AG04450 (cell line): ENCODE measurements at regions of chr12 and their contacts with region 1.

Region 1: GRCh38 chr12:10153271-10154144 is 18.4 kb downstream of the OLR1 start:
- DNase-seq: no peak
- H3K4me3 ChIP-seq: peak overlapping the region; percentile 50
- H3K27ac ChIP-seq: peak overlapping the region; percentile 70
- H3K27me3 ChIP-seq: no peaks in the 10 kb centered on the region
- CTCF ChIP-seq: peak; percentile 78

Region 2: DNA sequence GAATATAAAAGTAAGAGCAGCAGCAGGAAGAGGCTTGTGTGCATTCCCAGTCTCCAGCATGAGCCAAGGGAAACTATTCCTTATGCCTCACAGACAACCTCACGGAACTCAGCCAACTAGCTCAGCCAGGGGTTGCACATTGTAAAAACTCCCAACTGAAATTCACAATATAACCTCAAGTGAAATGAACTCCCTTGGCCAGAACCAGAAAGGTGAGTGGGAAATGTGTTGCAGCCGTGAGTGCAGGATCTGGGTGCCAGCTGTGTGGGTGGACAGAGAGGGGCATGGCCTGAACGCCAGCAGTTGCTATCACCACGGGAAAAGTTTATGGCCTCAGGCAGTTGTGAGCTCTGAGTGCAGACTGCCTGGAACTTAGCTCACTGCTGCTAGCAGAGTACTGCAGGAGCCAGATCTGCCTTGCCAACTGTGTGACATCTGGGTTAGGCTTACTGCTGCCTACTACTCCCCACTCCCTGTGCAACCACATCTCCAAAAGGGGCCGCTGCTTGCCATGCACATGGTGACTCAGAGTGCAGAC is 52.4 kb before region 1 on chr12:
- CTCF ChIA-PET with region 1: no interaction called
- POLR2A ChIA-PET with region 1: no interaction called
- DNase-seq: no peak
- H3K4me3 ChIP-seq: no peak overlapping the region
- H3K27ac ChIP-seq: no peak overlapping the region
- H3K27me3 ChIP-seq: no peaks in the 10 kb centered on the region
- CTCF ChIP-seq: no peak

Region 3: GRCh38 chr12:10130042-10130441 is 23.5 kb before region 1 on chr12 and contains the start of gene CLEC7A:
- CTCF ChIA-PET with region 1: interaction called, 13 read pairs
- POLR2A ChIA-PET with region 1: no interaction called
- DNase-seq: no peak
- H3K4me3 ChIP-seq: no peak within 1 kb of the TSS
- H3K27ac ChIP-seq: no peak within 1 kb of the TSS
- H3K27me3 ChIP-seq: no peaks in the 10 kb centered on the region
- CTCF ChIP-seq: no peak
- polyA plus RNA-seq, gene CLEC7A: not detected in 2 replicates

Region 4: GRCh38 chr12:10167588-10167987 is 14.1 kb after region 1 on chr12:
- CTCF ChIA-PET with region 1: interaction called, 50 read pairs
- POLR2A ChIA-PET with region 1: interaction called, 3 read pairs
- DNase-seq: no peak
- H3K4me3 ChIP-seq: no peak overlapping the region
- H3K27ac ChIP-seq: no peak overlapping the region
- H3K27me3 ChIP-seq: no peaks in the 10 kb centered on the region
- CTCF ChIP-seq: no peak

Region 5: GRCh38 chr12:10190558-10191388 is 37.3 kb after region 1 on chr12:
- CTCF ChIA-PET with region 1: interaction called, 70 read pairs
- POLR2A ChIA-PET with region 1: interaction called, 10 read pairs
- DNase-seq: no peak
- H3K4me3 ChIP-seq: no peak overlapping the region
- H3K27ac ChIP-seq: no peak overlapping the region
- H3K27me3 ChIP-seq: no peaks in the 10 kb centered on the region
- CTCF ChIP-seq: peak; percentile 82

Region 6: DNA sequence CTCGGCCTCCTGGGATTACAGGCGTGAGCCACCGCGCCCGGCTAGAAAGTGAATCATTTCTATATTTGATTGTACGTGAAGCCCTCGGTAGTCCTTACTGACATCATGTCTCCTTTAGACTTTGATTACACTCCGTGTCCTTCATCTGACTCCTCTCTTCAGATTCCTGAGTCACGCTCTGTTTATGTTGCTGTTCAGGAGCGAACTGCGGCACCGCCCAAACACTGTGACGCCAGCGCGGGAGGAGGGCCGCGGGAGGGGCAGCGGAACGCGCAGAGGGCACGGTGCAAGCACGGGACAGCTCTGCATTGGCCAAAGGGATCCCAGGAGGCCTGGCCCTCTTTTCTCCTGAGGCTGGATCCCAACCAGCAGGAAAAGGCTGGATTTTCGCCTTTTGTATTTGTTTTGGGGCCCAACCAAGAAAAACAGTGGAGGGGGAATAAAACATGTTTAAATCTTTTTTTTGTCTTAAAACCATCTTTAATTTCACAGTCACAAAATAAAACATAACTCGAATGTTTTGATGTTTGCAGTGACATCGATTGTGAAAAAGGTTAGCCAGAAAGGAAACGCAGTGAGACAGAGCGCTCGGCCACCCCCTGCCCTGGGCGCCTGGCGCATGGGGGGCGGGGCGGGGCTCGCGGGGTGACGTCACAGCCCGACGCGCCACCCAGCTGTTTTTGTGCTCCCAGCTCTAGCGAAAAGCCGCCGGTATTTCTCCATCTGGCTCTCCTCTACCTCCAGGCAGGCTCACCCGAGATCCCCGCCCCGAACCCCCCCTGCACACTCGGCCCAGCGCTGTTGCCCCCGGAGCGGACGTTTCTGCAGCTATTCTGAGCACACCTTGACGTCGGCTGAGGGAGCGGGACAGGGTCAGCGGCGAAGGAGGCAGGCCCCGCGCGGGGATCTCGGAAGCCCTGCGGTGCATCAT is 59.0 kb after region 1 on chr12 and contains the start of gene GABARAPL1:
- CTCF ChIA-PET with region 1: interaction called, 36 read pairs
- POLR2A ChIA-PET with region 1: interaction called, 21 read pairs
- DNase-seq: peak; percentile 99
- H3K4me3 ChIP-seq: peak within 1 kb of the TSS; percentile 100
- H3K27ac ChIP-seq: peak within 1 kb of the TSS; percentile 100
- H3K27me3 ChIP-seq: no peaks in the 10 kb centered on the region
- CTCF ChIP-seq: no peak
- polyA plus RNA-seq, gene GABARAPL1: 181 and 196 TPM in 2 replicates

Region 7: DNA sequence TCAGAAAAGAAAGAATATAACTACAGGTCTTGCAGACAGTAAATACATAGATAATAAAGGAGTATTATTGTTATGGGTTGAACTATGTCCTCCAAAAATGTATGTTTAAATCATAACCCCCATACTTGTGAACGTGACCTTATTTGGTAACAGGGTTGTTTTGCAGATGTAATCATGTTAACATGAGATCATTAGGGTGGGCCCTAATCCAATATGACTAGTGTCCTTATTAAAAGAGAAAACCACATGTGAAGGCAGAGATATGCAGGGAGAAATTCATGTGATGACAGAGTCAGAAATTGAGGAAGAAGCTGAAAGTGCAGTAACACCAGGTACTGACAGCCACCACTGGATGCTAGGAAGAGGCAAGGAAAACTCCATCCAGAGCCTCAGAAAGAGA is 430.9 kb after region 1 on chr12:
- CTCF ChIA-PET with region 1: no interaction called
- POLR2A ChIA-PET with region 1: no interaction called
- DNase-seq: no peak
- H3K4me3 ChIP-seq: no peak overlapping the region
- H3K27ac ChIP-seq: no peak overlapping the region
- H3K27me3 ChIP-seq: no peaks in the 10 kb centered on the region
- CTCF ChIP-seq: no peak